ENCODE measurements at regions of chr4 and their contacts with region 1.

Region 1: GRCh38 chr4:74228691-74229640 is 71.0 kb downstream of the MTHFD2L start:
- DNase-seq: peak; percentile 82
- ATAC-seq: peak; percentile 92
- H3K4me3 Mint-ChIP-seq: no peak overlapping the region
- H3K27ac Mint-ChIP-seq: no peak overlapping the region
- H3K4me1 Mint-ChIP-seq: peaks cover 9% of the 10 kb centered on the region
- H3K27me3 Mint-ChIP-seq: no peaks in the 10 kb centered on the region

Region 2: GRCh38 chr4:74217365-74217764 is 11.6 kb before region 1 on chr4:
- CTCF ChIA-PET with region 1: interaction called, 12 read pairs
- POLR2A ChIA-PET with region 1: no interaction called
- DNase-seq: no peak
- ATAC-seq: no peak
- H3K4me3 Mint-ChIP-seq: no peak overlapping the region
- H3K27ac Mint-ChIP-seq: no peak overlapping the region
- H3K4me1 Mint-ChIP-seq: no peaks in the 10 kb centered on the region
- H3K27me3 Mint-ChIP-seq: no peaks in the 10 kb centered on the region

Region 3: DNA sequence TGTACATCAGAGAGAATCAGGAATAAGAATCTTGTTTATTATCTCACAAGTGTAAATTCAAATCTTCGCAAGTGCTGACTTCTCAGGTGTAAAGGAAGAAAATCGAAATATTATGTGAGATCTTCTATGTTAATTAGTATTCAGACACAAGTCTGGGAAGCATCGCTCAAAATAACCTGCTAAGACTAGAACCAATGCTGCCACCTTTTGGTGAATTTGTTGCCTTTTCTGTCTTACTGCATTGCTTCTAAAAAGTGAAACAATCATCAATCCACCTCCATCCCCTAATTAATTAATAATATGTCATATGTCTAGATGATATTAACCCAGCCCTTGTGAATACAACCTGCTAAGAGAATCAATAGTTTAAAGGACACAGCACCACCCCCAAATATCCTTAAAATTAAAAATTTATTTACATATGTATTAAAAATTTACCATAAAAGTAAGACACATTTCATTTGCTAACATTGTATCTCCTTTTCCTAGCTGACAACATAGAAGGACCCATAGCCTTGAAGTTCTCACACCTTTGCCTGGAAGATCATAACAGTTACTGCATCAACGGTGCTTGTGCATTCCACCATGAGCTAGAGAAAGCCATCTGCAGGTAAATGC is 82.8 kb after region 1 on chr4:
- CTCF ChIA-PET with region 1: interaction called, 16 read pairs
- POLR2A ChIA-PET with region 1: no interaction called
- DNase-seq: peak; percentile 45
- ATAC-seq: no peak
- H3K4me3 Mint-ChIP-seq: no peak overlapping the region
- H3K27ac Mint-ChIP-seq: no peak overlapping the region
- H3K4me1 Mint-ChIP-seq: peaks cover 6% of the 10 kb centered on the region
- H3K27me3 Mint-ChIP-seq: no peaks in the 10 kb centered on the region

Measured in activated CD8-positive, alpha-beta T cell treated with anti-CD3 and anti-CD28 coated beads, Interleukin-2, amount 10 ng/mL, durations not matched to agents 7 days and 5 days (primary cell).